Sciatic nerve (tissue), 2 donors: ENCODE measurements at regions of chr17 and their contacts with region 1.

Region 1: DNA sequence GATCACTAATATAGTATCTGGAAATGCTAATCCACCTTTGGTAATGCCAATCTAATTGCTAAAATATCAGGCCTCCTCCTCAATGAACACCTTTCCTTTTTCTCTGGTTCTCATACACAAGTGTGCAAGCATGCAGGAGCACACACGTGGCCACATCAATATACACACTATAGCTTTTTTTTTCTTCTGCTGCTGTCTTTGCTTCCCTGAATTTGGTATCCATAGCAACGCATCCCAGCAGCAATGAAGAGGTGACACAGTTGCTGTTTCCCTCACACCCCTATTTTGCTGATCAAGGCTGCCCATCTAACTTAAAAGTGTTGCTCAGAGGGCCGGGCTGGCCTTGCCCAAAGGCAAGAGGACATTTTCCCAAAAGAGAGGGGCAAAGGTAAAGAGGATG is 15.5 kb downstream of the NOG start:
- DNase-seq: no peak
- ATAC-seq: no peak

Region 2: GRCh38 chr17:56577843-56578204 is 31.1 kb before region 1 on chr17:
- intact Hi-C with region 1: loop called (anchors 1 kb)
- DNase-seq: no peak
- ATAC-seq: no peak